ENCODE measurements at regions of chr22 and their contacts with region 1.

Region 1: DNA sequence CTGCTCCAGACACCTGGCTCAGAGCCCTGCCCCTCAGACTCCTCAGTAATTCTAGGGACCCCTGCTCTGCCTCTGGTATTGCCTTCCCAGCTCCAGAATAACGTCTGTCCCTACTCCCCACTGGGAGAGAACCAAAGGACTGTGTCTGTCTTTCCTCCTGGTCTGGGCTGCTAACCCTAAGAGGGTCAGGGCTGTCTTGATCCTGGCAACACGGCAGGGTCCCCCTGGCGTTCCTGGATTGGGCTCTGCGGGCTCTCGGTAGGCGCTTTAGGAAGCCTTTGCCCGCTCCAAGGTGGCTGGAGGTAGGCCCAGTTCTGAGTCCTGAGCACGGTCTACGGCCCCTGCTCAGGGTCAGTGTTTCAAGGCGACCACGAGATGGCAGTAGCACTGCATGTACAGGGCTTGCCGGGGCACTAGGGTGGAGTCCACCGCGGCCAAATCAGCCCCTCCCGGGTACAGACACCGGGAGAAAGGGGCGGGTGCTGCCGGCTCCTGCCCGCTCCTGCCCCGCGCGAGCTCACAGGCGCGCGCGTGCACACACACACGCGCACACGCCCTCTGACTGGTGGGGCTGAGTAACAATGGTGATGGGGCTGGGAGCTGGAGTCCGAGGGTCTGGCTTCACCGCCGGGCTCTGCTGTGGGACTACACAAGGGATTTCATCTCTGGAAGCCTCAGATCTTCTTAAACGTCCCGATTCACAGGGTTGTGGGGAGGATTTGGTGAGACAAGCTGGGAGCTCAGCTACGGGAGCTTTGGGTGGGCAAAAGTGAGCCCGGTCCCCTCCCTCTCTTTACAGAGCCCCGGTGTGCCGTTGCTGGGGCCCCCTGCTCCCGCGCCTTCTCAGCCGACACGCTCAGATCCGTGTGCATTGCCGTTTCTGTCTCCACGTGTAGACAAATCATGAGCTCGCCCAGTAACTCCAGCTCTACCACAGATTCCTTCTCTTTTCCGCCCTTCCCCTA is 30.1 kb upstream of the HMOX1 start:
- DNase-seq: peak; percentile 85 to 89 (median 88)
- H3K4me3 ChIP-seq: peak overlapping the region in 6 of 7 experiments; percentile 23 to 81 (median 62)
- H3K27ac ChIP-seq: no peak overlapping the region
- H3K4me1 ChIP-seq: peaks cover 0 to 38% (median 34%) of the 10 kb centered on the region in 4 experiments
- H3K27me3 ChIP-seq: peaks cover 0 to 8% (median 4%) of the 10 kb centered on the region in 5 experiments

Region 2: DNA sequence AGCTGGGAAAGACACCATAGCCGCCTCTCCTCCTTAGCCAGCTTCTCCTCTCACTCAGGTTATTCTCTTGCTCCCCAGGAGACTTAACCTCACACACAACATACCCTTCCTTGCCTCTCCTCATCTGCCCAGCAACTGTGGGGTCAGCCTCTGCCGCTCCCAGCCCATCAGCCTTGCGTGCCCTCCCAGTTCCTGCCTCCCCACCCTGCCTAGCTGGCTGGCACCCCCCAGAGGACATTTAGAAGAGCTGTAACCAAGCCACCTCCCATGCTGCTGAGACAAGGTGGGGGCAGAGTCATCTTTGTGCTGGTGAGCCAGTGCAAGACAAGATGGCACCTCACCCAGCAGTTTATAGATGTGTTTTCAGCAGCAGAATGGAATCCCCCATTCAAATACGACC is 12.9 kb before region 1 on chr22:
- CTCF ChIA-PET with region 1: interaction called, 10 read pairs
- POLR2A ChIA-PET with region 1: no interaction called
- DNase-seq: peak in 2 of 3 donors; percentile 34 to 40
- H3K4me3 ChIP-seq: no peak overlapping the region
- H3K27ac ChIP-seq: no peak overlapping the region
- H3K4me1 ChIP-seq: peaks cover 5 to 34% (median 24%) of the 10 kb centered on the region in 4 experiments
- H3K27me3 ChIP-seq: no peaks in the 10 kb centered on the region

Region 3: GRCh38 chr22:35376728-35377472 is 26.1 kb after region 1 on chr22:
- CTCF ChIA-PET with region 1: interaction called, 10 read pairs
- POLR2A ChIA-PET with region 1: interaction called, 4 read pairs
- DNase-seq: peak; percentile 97 to 98 (median 97)
- H3K4me3 ChIP-seq: peak overlapping the region in 2 of 7 experiments; percentile 42 to 45
- H3K27ac ChIP-seq: peak overlapping the region in 1 of 2 experiments; percentile 63
- H3K4me1 ChIP-seq: peaks cover 6 to 65% (median 46%) of the 10 kb centered on the region in 4 experiments
- H3K27me3 ChIP-seq: peaks cover 0 to 8% (median 0%) of the 10 kb centered on the region in 5 experiments

Region 4: DNA sequence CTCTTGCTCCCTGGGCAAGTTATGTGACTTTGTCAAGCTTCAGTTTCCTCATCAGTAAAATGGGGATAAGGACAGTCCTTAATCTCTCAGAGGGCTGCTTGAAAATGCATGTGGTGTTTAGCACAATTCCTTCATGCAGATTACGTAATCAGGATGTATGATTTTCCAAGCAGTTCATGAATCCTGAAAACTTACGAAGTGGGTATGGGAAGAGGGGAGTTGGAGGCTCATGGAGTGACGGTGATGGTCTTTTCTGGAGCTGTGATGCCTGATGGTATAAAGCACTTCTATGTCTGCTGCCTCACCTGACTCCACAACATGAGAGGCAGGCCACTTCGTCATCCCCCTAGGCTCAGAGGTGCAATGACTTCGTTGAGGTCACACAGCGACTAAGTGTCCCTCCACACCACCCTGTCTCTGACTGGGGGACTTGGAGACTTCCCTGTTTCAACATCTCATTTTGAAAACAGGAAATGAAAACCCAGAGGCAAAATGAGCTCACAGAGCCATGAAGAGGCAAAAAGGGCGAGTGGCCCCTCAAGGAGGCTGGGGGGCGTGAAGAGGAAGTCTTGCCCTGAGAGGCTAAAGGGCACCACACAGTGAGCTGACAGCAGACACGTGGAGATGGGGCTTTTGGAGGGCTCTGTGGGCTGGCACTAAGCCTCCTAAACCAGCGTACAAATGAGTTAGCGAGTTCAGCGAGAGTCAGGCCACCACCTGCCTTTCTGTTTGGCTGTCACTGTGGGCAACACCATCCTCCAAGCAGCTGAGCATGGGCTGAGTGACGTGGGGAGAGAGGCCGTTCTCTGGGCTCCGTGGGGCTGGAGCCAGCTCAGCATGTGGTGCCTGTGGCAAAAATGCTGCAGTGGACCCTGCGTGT is 59.2 kb after region 1 on chr22:
- CTCF ChIA-PET with region 1: interaction called, 50 read pairs
- POLR2A ChIA-PET with region 1: interaction called, 3 read pairs
- DNase-seq: peak; percentile 84 to 96 (median 95)
- H3K4me3 ChIP-seq: peak overlapping the region in 2 of 7 experiments; percentile 11 to 33
- H3K27ac ChIP-seq: peak overlapping the region in 1 of 2 experiments; percentile 59
- H3K4me1 ChIP-seq: peaks cover 3 to 32% (median 18%) of the 10 kb centered on the region in 4 experiments
- H3K27me3 ChIP-seq: no peaks in the 10 kb centered on the region

Region 5: DNA sequence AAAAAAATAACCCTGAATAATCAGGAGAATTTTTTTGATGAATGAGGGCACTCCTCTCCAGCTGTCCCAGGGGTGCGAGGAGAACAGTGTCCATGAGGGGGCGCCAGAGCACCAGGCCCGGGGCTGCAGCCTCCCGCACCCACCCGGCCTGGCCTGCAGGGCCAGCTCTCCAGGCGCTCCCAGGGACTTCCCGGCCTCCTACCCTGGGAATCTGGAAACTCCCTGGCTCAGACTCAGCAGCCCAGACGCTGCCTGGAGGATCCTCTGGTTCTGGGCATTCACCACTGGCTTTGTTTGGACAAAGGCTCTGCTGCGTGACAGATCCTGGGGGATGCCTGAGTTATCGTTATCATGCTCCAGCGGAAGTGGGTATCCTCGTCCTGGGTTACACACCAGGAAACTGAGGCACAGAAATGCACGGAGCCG is 80.1 kb after region 1 on chr22:
- CTCF ChIA-PET with region 1: interaction called, 17 read pairs
- POLR2A ChIA-PET with region 1: no interaction called
- DNase-seq: peak; percentile 50 to 72 (median 64)
- H3K4me3 ChIP-seq: no peak overlapping the region
- H3K27ac ChIP-seq: no peak overlapping the region
- H3K4me1 ChIP-seq: no peaks in the 10 kb centered on the region
- H3K27me3 ChIP-seq: no peaks in the 10 kb centered on the region

Region 6: GRCh38 chr22:35582861-35583670 is 232.2 kb after region 1 on chr22:
- CTCF ChIA-PET with region 1: interaction called, 11 read pairs
- POLR2A ChIA-PET with region 1: no interaction called
- DNase-seq: peak; percentile 58 to 67 (median 65)
- H3K4me3 ChIP-seq: no peak overlapping the region
- H3K27ac ChIP-seq: no peak overlapping the region
- H3K4me1 ChIP-seq: no peaks in the 10 kb centered on the region
- H3K27me3 ChIP-seq: no peaks in the 10 kb centered on the region

Measured in common myeloid progenitor, CD34-positive (primary cell).